Left cardiac atrium (tissue), 4 donors: ENCODE measurements at regions of chr11 and their contacts with region 1.

Region 1: DNA sequence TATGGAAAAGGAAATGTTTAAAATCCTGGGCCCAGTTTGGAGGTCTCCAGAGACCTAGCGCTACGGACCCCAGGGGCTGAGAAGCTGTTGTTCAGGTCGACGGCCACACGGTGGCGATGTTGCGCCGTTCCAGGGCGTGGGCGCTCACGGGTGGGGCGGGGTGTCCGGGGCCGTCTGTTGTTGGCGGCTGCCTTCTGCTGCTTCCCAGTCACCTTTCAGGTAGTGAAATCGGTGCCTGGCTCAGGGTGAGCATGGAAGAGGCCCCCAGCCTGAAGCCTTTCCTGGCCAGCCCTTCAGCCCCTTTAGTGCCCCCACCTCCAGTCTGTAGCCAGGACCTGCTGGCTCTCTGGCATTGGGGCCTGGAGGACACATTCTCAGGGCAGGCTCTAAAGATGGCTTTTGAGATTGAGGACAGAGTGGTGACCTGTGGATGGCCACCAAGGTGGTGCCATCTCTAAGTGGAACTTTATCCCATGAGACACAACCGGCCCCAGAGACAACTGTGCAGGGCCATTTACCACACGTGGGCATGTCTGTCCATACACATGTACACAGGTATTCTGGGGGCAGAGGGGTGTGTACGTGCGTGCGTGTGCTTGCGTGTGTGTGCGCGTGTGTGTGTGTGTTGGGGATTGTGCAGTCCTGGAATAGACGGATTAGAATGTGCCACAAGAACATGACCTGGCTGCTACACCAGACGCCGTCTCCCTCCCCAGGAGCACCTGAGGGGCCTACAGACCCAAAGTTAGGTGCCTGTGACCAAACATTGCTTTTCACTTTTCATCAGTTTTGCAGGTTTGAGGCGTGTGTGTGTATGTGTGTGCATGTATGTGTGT is 53.8 kb downstream of the ST14 start:
- DNase-seq: peak; percentile 69
- ATAC-seq: peak; percentile 70

Region 2: GRCh38 chr11:130269326-130269943 is 56.1 kb after region 1 on chr11:
- intact Hi-C with region 1: no loop called
- DNase-seq: no peak
- ATAC-seq: no peak

Region 3: GRCh38 chr11:130330101-130330684 is 116.8 kb after region 1 on chr11:
- intact Hi-C with region 1: no loop called
- DNase-seq: no peak
- ATAC-seq: no peak

Region 4: GRCh38 chr11:130383344-130384211 is 170.2 kb after region 1 on chr11:
- intact Hi-C with region 1: loop called in 1 of 2 experiments (anchors 10 kb)
- DNase-seq: no peak
- ATAC-seq: peak; percentile 14 to 61

Region 5: GRCh38 chr11:130427581-130428315 is 214.4 kb after region 1 on chr11:
- intact Hi-C with region 1: loop called (anchors 2 to 5 kb)
- DNase-seq: peak; percentile 41
- ATAC-seq: peak; percentile 22 to 28

Region 6: GRCh38 chr11:130861902-130862860 is 648.8 kb after region 1 on chr11:
- intact Hi-C with region 1: loop called in 1 of 2 experiments (anchors 10 kb)
- DNase-seq: peak; percentile 93
- ATAC-seq: peak; percentile 60 to 67

Region 7: DNA sequence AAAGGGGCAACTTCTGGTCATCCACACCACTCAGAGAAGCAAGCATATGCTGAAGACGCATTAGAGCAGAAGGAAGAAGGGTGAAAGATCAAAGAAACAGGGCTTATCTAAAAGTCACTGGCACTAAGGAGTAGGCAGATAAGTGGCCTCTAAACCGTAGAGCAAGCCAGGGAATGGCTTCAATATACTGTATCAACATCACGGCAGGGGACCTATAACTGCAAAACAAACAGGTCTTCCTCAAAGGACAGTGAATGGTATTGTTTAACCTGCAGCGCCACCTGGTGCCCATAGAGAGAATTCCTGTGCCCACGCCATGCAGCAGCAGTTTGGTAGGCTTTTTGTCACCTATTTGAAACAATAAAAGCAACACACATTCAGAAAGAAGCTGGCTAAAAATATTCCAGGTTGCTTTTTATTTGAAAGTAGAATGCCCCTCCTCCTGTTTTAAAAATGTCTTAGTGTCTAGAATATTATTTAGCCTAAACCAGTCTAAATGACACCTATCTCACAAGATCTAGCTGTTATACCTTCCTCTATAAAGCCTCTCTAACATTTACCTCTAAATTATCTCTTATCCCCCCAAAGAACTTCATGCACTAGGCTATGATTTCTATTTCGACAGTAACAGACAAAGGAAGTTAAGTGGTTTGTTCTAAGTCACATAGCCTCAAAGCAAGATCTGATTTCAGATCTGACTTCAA is 681.1 kb after region 1 on chr11:
- intact Hi-C with region 1: loop called in 1 of 2 experiments (anchors 10 kb)
- DNase-seq: peak; percentile 74
- ATAC-seq: peak in 1 of 2 donors; percentile 21